Posterior cingulate gyrus (tissue), 11 donors: ENCODE measurements at regions of chr4 and their contacts with region 1.

Region 1: DNA sequence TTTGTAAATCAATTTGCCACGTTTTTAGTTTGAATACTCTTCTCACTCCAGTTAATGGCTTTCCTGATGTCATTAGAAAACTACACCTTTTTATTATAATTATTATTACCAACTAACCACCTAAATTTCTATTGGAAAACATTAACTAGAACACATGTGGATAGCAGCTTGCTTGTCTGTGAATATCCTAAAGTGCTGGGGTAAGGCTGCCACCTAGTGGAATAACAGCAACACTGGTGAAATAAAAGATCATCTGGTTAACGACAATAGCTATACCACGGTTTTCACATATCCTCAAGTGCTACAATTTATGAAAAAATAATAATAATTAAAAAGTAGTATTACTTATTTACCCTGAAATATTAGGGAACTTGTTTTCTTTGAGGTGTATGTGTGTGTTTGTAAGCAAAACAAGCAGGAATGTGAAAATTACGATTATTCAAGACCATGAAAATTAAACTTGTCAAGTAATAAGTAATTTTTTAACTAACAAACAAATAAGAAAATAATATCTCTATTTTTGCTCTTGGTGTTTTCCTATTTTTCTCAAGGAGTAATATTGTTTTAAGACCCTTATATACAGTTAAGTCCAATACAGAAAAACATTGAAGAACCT is 130.1 kb upstream of the TECRL start:
- DNase-seq: peak in 3 of 10 donors; percentile 38 to 51 (median 51)

Region 2: DNA sequence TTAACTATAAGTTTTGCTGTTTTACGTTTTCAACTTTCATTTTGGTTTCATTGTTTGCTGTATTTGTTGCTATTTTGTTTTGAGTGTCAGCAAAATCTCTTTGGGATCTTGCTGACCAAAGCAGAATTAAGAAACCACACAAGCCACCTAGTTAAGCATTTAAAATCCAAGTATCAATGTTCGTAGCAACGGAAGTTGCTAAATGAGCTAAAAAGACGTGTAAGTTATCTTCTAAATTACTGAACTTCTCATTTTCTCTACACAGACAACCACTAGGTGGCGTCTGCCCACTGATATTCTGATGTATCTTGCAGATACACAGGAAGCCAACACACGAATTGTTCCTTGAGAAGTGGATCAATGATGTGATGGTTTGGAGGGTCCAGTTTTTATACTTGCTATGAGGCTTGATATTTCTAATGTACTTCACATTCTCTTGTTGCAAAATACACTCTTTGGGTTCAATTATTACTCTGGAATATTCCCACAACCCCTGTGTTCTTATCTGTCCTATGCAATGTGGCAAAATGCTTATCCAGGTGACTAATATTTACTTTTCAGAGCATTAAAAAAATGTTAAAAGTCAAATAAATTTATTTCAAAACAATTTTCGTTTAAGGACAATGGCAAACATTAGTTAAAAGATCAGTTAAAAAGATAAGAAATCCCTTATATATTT is 380.6 kb before region 1 on chr4:
- intact Hi-C with region 1: loop called (anchors 1 kb)
- DNase-seq: peak in 6 of 10 donors; percentile 39 to 87 (median 58)

Region 3: DNA sequence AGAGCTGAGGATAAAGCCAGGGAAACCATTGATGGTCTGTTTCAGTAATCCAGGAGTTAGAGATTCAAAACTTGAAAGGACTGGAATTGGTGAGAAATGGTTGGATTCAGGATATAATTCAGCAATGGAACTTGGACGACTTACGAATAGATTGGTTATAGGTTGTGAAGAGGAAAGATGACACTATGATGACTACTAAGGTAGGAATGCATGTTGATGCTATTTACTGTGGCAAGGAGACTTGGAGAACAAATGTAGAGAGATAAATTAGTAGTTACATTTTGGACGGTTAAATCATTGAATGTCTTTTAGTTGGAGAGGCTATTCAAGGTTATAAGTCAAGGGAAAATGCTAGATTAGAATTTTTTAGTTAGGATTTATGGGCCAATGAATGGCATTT is 235.3 kb after region 1 on chr4:
- intact Hi-C with region 1: no loop called
- DNase-seq: no peak

Region 4: GRCh38 chr4:64799751-64800150 is 260.4 kb after region 1 on chr4:
- intact Hi-C with region 1: no loop called
- DNase-seq: peak in 1 of 10 donors; percentile 42

Region 5: DNA sequence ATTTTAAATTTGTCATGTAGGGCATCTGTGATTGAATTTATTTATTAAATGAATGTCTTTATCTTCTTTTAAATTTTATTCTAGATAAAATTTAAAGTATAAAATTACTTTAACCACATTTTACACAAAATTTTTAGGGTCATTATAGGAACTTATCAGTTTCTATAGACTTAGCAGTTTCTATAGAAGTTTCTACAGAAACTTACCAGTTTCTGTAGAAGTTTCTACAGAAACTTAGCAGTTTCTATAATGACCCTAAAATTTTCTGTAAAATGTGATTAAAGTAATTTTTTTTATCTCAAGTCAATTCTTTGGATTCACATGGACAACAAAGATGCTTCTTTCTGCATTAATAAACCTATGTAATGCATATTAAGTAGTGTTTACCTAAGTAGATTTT is 435.8 kb after region 1 on chr4:
- intact Hi-C with region 1: no loop called
- DNase-seq: no peak